ENCODE measurements at regions of chr12 and their contacts with region 1.

Region 1: GRCh38 chr12:33605751-33606150 is 166.1 kb upstream of the SYT10 start:
- DNase-seq: no peak
- ATAC-seq: no peak
- H3K4me3 ChIP-seq: no peak overlapping the region
- H3K27ac ChIP-seq: no peak overlapping the region
- H3K4me1 ChIP-seq: no peaks in the 10 kb centered on the region
- H3K27me3 ChIP-seq: no peaks in the 10 kb centered on the region
- CTCF ChIP-seq: no peak
- POLR2A ChIP-seq: no peak
- RAD21 ChIP-seq: no peak

Region 2: GRCh38 chr12:32737715-32738114 is 868.0 kb before region 1 on chr12:
- CTCF ChIA-PET with region 1: no interaction called
- POLR2A ChIA-PET with region 1: no interaction called
- dilution Hi-C with region 1: no loop called
- in situ Hi-C with region 1: no loop called
- intact Hi-C with region 1: no loop called
- DNase-seq: no peak
- ATAC-seq: no peak
- H3K4me3 ChIP-seq: no peak overlapping the region
- H3K27ac ChIP-seq: no peak overlapping the region
- H3K4me1 ChIP-seq: no peaks in the 10 kb centered on the region
- H3K27me3 ChIP-seq: no peaks in the 10 kb centered on the region
- CTCF ChIP-seq: no peak
- POLR2A ChIP-seq: no peak
- RAD21 ChIP-seq: no peak

Region 3: DNA sequence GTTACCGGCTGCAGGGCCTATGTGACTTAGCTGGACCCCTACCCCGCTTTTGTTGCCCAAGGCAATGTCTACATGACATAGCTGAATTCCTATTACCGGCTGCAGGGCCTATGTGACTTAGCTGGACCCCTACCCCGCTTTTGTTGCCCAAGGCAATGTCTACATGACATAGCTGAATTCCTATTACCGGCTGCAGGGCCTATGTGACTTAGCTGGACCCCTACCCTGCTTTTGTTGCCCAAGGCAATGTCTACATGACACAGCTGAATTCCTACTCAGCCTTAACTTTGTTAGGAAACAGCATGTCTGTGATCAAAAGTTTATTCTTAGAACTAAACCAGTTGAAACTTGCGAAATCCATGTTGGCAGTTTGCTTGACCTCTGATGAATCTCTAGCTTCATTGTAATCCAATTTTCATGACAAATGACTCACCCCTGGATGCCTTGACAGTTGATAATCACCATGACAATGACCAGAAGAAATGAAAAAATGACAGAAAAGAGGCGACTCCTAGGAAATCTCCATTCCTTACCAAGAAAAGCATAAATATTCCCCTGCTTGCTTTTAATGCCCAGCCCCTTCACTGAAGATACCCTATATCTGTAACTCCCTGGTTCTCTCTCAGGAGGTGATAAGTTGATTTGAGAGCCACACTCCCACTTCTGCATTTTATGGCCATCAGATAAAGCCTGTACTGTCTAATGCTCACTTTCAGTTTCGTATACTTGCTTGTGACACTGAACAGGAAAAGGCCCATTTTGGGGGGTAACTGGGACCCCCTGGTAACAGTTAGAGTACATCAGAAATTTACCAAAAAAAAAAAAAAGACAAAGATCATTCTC is 17.7 kb before region 1 on chr12:
- CTCF ChIA-PET with region 1: no interaction called
- POLR2A ChIA-PET with region 1: no interaction called
- dilution Hi-C with region 1: no loop called
- in situ Hi-C with region 1: no loop called
- intact Hi-C with region 1: loop called (anchors 1 kb)
- DNase-seq: no peak
- ATAC-seq: no peak
- H3K4me3 ChIP-seq: no peak overlapping the region
- H3K27ac ChIP-seq: no peak overlapping the region
- H3K4me1 ChIP-seq: no peaks in the 10 kb centered on the region
- H3K27me3 ChIP-seq: no peaks in the 10 kb centered on the region
- CTCF ChIP-seq: no peak
- POLR2A ChIP-seq: no peak
- RAD21 ChIP-seq: no peak